Endothelial cell of umbilical vein (primary cell): ENCODE measurements at regions of chr6 and their contacts with region 1.

Region 1: DNA sequence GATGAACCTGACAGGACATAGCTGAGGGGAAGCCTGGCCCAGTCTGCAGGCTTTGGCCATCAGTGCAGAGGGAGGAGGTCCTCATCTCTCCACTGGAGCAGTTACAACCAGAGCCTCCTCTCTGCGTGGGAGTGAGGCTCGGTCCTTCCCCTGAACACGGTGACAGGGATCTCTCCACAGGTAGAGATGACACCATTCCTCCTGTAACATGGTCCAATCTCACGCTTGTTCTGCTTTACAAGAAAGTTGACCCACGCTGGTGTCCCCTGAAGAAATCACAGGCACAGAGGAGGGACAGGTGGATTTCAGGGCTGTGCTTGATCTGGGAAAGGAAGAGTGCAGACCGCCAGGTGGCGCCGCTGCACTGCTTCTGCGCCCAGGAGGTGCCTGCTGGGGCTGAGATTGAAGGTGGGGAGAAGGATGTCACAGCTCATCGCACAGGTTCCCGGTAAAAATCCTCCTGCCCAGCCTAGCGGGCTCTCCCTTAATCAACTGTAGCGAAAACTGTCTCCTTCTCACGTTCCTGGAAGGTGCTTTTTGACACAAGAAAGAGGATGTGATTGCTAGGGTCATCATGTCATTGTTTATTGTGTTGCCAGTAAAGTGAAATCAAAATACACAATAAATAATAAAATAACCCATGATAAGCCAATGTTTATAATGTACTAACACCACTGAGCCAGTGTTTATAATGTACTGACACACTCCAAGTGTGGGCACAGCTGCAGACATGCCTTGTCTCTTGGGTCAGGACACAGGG is 20.4 kb downstream of the HLA-G start:
- DNase-seq: peak; percentile 57
- H3K4me3 ChIP-seq: no peak overlapping the region
- H3K27ac ChIP-seq: no peak overlapping the region
- H3K4me1 ChIP-seq: no peaks in the 10 kb centered on the region
- H3K27me3 ChIP-seq: peaks cover 41 to 48% of the 10 kb centered on the region in 2 experiments
- CTCF ChIP-seq: peak; percentile 87 to 92
- POLR2A ChIP-seq: no peak

Region 2: GRCh38 chr6:29887819-29888776 is 40.0 kb after region 1 on chr6:
- CTCF ChIA-PET with region 1: interaction called, 3 read pairs
- POLR2A ChIA-PET with region 1: no interaction called
- dilution Hi-C with region 1: no loop called
- intact Hi-C with region 1: loop called (anchors 5 kb)
- DNase-seq: peak; percentile 10
- H3K4me3 ChIP-seq: peak overlapping the region; percentile 43 to 53 (median 46)
- H3K27ac ChIP-seq: no peak overlapping the region
- H3K4me1 ChIP-seq: peaks cover 5% of the 10 kb centered on the region
- H3K27me3 ChIP-seq: peaks cover 19 to 23% of the 10 kb centered on the region in 2 experiments
- CTCF ChIP-seq: no peak
- POLR2A ChIP-seq: no peak

Region 3: DNA sequence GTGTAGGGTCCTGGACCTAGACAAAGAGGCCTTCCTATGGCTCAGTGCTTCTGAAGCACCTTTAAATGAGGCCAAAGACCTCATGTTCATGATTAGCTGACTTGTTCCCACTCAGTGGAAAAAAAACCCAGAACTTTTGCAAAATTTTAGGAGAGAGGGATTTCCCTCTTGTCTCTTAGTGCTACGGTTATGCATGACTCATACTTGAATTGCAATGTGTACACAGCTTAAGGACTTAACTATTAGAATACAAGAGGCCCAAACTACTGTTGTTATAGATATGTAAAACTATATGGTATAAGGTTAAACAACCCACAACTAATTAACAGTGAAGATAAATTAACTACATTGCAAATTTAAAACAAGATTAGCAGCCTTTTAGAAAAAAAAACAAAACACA is 61.9 kb after region 1 on chr6:
- CTCF ChIA-PET with region 1: no interaction called
- POLR2A ChIA-PET with region 1: no interaction called
- dilution Hi-C with region 1: no loop called
- intact Hi-C with region 1: no loop called
- DNase-seq: no peak
- H3K4me3 ChIP-seq: no peak overlapping the region
- H3K27ac ChIP-seq: no peak overlapping the region
- H3K4me1 ChIP-seq: no peaks in the 10 kb centered on the region
- H3K27me3 ChIP-seq: peaks cover 10 to 31% of the 10 kb centered on the region in 2 experiments
- CTCF ChIP-seq: no peak
- POLR2A ChIP-seq: no peak

Region 4: GRCh38 chr6:29976588-29977424 is 128.8 kb after region 1 on chr6:
- CTCF ChIA-PET with region 1: interaction called, 12 read pairs
- POLR2A ChIA-PET with region 1: no interaction called
- dilution Hi-C with region 1: no loop called
- intact Hi-C with region 1: loop called (anchors 1 kb)
- DNase-seq: peak; percentile 76
- H3K4me3 ChIP-seq: peak overlapping the region; percentile 49 to 56 (median 54)
- H3K27ac ChIP-seq: peak overlapping the region; percentile 35
- H3K4me1 ChIP-seq: peaks cover 12% of the 10 kb centered on the region
- H3K27me3 ChIP-seq: peaks cover 10 to 18% of the 10 kb centered on the region in 2 experiments
- CTCF ChIP-seq: peak in 1 of 2 donors; percentile 18
- POLR2A ChIP-seq: peak; percentile 17

Region 5: GRCh38 chr6:30037182-30037788 is 189.2 kb after region 1 on chr6:
- CTCF ChIA-PET with region 1: interaction called, 21 read pairs
- POLR2A ChIA-PET with region 1: no interaction called
- dilution Hi-C with region 1: no loop called
- intact Hi-C with region 1: no loop called
- DNase-seq: peak; percentile 13
- H3K4me3 ChIP-seq: no peak overlapping the region
- H3K27ac ChIP-seq: no peak overlapping the region
- H3K4me1 ChIP-seq: no peaks in the 10 kb centered on the region
- H3K27me3 ChIP-seq: no peaks in the 10 kb centered on the region
- CTCF ChIP-seq: peak; percentile 48 to 60
- POLR2A ChIP-seq: no peak

Region 6: GRCh38 chr6:30169658-30170614 is 321.9 kb after region 1 on chr6:
- CTCF ChIA-PET with region 1: no interaction called
- POLR2A ChIA-PET with region 1: no interaction called
- dilution Hi-C with region 1: no loop called
- intact Hi-C with region 1: loop called (anchors 1 kb)
- DNase-seq: peak; percentile 66
- H3K4me3 ChIP-seq: no peak overlapping the region
- H3K27ac ChIP-seq: no peak overlapping the region
- H3K4me1 ChIP-seq: no peaks in the 10 kb centered on the region
- H3K27me3 ChIP-seq: peaks cover 51 to 74% of the 10 kb centered on the region in 2 experiments
- CTCF ChIP-seq: peak; percentile 57 to 74
- POLR2A ChIP-seq: no peak